Heart left ventricle (tissue), 16 donors: ENCODE measurements at regions of chr4 and their contacts with region 1.

Region 1: DNA sequence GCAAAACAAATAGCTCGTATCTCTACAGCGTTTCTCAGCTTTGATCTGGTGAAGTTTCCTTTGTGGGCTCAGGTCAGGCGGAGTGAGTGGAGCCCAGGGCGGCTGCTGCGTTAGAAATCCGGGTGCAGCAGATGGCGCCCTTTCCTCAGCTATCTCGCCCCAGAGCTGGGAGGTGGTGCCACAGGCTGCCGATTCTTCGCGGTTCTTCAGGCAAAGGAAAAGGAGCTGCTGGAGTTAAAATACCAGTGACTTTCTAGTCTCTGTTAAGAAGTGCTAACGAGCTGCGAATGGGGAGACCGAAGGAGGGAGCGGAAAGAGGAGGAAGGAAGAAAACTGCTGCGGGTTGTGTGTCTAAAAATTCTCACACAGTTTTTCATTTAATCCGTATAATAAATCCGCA is 114.6 kb downstream of the CPE start:
- DNase-seq: peak; percentile 50 to 83 (median 64)
- ATAC-seq: peak; percentile 75 to 97 (median 93)
- H3K4me3 ChIP-seq: peak overlapping the region in 2 of 12 donors; percentile 10 to 32
- H3K27ac ChIP-seq: no peak overlapping the region
- H3K4me1 ChIP-seq: peaks cover 0 to 4% (median 0%) of the 10 kb centered on the region in 12 donors
- H3K27me3 ChIP-seq: peaks cover 0 to 3% (median 0%) of the 10 kb centered on the region in 9 donors
- CTCF ChIP-seq: peak; percentile 47 to 80 (median 66)
- POLR2A ChIP-seq: no peak

Region 2: DNA sequence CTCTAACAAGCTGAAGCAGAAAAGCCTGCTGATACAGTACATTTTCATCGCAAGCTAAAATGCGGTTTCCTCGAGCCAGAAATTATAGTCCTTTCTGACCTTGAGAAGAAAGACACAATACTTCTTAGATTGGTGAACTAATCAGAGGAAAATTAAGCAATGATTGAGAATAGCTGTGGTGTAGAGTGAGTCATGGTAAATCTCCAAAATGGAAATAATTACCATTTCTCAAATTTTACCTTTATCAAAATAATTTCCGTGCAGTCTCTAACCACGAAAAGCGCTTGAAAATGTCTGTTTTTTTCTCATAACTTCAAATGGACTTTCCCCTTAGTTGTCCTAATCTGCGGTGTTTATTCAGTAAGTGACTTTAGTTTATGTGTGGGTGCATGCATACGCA is 75.7 kb after region 1 on chr4:
- intact Hi-C with region 1: no loop called
- DNase-seq: no peak
- ATAC-seq: no peak
- H3K4me3 ChIP-seq: no peak overlapping the region
- H3K27ac ChIP-seq: no peak overlapping the region
- H3K4me1 ChIP-seq: no peaks in the 10 kb centered on the region
- H3K27me3 ChIP-seq: no peaks in the 10 kb centered on the region
- CTCF ChIP-seq: no peak
- POLR2A ChIP-seq: no peak

Region 3: GRCh38 chr4:166091912-166092510 is 598.7 kb after region 1 on chr4:
- intact Hi-C with region 1: loop called in 8 of 10 experiments (anchors 1 to 5 kb)
- DNase-seq: no peak
- ATAC-seq: no peak
- H3K4me3 ChIP-seq: no peak overlapping the region
- H3K27ac ChIP-seq: no peak overlapping the region
- H3K4me1 ChIP-seq: no peaks in the 10 kb centered on the region
- H3K27me3 ChIP-seq: no peaks in the 10 kb centered on the region
- CTCF ChIP-seq: peak; percentile 65 to 89 (median 76)
- POLR2A ChIP-seq: no peak

Region 4: GRCh38 chr4:166252487-166253402 is 759.4 kb after region 1 on chr4:
- intact Hi-C with region 1: loop called in 1 of 10 experiments (anchors 2 kb)
- DNase-seq: no peak
- ATAC-seq: no peak
- H3K4me3 ChIP-seq: no peak overlapping the region
- H3K27ac ChIP-seq: no peak overlapping the region
- H3K4me1 ChIP-seq: no peaks in the 10 kb centered on the region
- H3K27me3 ChIP-seq: no peaks in the 10 kb centered on the region
- CTCF ChIP-seq: peak in 11 of 12 donors; percentile 20 to 54 (median 29)
- POLR2A ChIP-seq: no peak

Region 5: DNA sequence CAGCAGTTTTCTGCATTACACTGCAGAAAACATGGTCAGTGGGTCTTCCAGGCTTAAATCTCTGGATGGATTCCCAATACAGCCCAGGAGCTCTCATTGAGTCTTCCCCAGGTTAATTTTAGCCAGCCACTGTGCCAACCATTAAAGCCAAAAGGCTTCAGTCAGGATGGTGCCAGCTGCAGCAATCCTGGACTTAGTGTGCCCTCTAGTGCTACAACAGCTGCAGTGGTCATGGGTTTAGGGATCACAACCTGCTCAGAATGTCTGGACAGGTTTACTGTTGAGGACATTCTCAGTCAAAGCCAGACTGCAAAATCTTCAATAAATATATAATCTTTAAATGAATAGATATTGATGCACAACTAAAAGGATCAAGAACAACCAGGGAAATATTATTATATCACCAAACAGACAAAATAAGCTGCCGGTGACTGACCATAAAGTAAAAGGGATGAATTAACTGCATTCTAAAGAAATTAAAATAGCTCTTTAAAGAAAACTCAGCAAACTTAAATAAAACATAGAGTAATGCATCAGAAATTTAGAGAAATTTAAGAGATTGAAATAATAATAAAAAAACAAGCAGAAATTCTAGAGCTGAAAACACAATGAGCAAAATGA is 1101.1 kb after region 1 on chr4:
- intact Hi-C with region 1: loop called in 1 of 10 experiments (anchors 10 kb)
- DNase-seq: peak in 2 of 5 donors; percentile 21 to 25
- ATAC-seq: peak in 3 of 4 donors; percentile 78 to 97 (median 91)
- H3K4me3 ChIP-seq: no peak overlapping the region
- H3K27ac ChIP-seq: no peak overlapping the region
- H3K4me1 ChIP-seq: no peaks in the 10 kb centered on the region
- H3K27me3 ChIP-seq: no peaks in the 10 kb centered on the region
- CTCF ChIP-seq: peak in 7 of 12 donors; percentile 19 to 56 (median 28)
- POLR2A ChIP-seq: no peak